Activated naive CD4-positive, alpha-beta T cell treated with anti-CD3 and anti-CD28 coated beads for 36 hours (primary cell): ENCODE measurements at regions of chr1 and their contacts with region 1.

Region 1: GRCh38 chr1:183281553-183282091 is 95.6 kb downstream of the LAMC2 start:
- DNase-seq: peak; percentile 88
- H3K4me3 Mint-ChIP-seq: no peak overlapping the region
- H3K27ac Mint-ChIP-seq: no peak overlapping the region
- H3K4me1 Mint-ChIP-seq: no peaks in the 10 kb centered on the region
- H3K27me3 Mint-ChIP-seq: no peaks in the 10 kb centered on the region

Region 2: DNA sequence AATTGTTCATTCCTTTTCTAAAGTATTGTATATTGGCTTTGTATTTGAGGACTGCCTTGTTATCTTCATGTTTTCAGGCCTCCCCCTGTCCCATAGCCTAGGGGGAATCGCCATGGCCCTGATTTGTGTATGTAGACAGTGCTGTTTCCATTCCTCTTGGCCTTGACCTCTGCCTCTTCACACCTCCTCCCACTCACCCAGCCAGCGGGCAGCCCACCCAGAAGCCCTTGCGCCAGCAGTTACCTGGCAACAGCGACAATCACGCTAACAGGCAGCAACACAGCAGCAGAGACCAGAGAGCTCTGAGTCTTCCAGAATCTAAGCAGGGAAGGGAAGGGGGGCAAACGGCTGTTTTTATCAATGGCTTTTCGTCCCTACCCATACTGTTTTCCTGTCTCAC is 542.1 kb before region 1 on chr1:
- CTCF ChIA-PET with region 1: no interaction called
- intact Hi-C with region 1: no loop called
- DNase-seq: no peak
- H3K4me3 Mint-ChIP-seq: no peak overlapping the region
- H3K27ac Mint-ChIP-seq: no peak overlapping the region
- H3K4me1 Mint-ChIP-seq: no peaks in the 10 kb centered on the region
- H3K27me3 Mint-ChIP-seq: no peaks in the 10 kb centered on the region

Region 3: DNA sequence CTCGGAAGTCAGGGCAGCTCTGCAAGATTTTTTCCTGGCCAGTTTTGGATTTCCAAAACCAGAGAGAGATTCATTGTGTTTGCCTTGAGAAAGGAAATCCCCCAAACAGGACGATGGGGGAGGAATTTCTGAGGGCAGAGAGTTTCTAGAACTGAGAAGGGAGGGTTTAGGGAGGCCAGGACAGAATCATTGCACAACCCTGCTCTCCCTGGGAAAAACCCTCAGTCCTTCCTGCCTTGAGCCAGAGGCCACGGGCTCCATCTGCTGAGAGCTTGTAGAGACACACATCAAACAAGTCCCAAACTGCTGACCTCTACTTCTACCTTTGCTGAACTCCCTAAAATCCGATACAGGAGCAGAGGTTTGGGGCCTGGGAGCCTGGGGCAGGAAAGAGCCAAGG is 36.8 kb after region 1 on chr1:
- CTCF ChIA-PET with region 1: no interaction called
- intact Hi-C with region 1: loop called (anchors 1 kb)
- DNase-seq: peak; percentile 31
- H3K4me3 Mint-ChIP-seq: no peak overlapping the region
- H3K27ac Mint-ChIP-seq: no peak overlapping the region
- H3K4me1 Mint-ChIP-seq: no peaks in the 10 kb centered on the region
- H3K27me3 Mint-ChIP-seq: peaks cover 10% of the 10 kb centered on the region

Region 4: DNA sequence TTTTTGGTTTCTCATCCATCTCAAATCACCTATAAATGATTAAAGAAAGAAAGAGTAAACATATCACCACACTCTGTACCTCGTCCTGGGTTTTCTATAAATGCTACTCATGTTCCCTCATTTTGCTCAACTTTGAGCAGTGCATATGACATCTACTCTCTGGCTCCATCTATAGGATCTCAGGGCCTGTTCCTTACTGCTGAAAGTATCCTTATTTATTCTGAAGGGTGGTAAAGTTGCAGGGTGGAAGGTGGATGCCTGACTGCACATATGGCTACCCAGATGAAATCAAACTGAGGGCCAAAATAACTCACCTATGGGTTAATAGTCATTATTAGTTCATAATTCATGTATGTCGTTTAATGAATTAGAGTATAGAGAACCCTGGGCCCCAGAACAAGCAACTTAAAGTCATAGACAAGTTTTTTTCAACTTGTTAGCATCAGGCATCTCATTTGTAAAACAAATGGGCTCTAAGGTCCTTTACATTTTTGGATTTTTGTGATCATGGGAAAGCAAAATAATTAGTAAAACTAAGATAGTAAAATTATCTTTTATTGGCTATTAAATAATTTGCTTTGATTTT is 262.1 kb after region 1 on chr1:
- CTCF ChIA-PET with region 1: interaction called, 5 read pairs
- intact Hi-C with region 1: loop called (anchors 2 kb)
- DNase-seq: no peak
- H3K4me3 Mint-ChIP-seq: no peak overlapping the region
- H3K27ac Mint-ChIP-seq: peak overlapping the region; percentile 43
- H3K4me1 Mint-ChIP-seq: no peaks in the 10 kb centered on the region
- H3K27me3 Mint-ChIP-seq: no peaks in the 10 kb centered on the region